ENCODE measurements at regions of chr16 and their contacts with region 1.

Region 1: DNA sequence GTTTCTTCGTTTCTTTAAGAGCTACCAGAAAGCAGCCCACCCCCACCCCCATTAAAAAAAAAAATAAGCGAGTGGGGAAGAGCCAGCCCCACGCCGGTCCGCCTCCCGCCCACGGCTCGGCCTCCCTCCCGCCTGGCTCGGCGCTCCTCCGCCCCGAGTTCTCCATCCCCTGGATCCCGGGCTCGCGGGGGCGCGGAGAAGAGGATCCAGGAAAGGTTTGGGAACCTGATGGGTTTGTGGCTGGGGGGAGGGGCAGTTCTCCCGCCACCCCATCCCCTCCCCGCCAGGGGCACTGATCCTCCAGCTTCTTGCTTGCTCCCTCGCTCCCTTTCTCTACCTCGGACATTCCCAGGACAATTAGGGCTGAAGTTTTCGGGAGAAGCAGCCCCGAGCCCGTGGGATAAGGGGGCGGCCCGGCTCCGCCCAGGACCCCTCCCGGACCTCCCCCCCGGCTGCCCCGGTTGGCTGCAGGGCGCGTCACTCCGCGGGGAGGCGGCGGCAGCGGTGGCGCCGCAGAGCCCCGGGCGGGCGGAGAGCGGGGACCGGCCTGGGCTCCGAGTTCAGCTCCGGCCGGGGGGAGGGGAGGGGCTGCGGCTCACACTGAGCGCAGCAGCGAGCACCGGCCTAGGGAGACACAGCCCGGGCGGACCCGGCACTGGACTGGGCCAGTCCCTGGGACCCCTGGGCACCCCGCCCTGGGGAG is 1.0 kb upstream of the SALL1 start:
- DNase-seq: peak; percentile 41 to 97 (median 88)
- H3K4me3 ChIP-seq: peak overlapping the region; percentile 45 to 97 (median 79)
- H3K27ac ChIP-seq: peak overlapping the region; percentile 79 to 99 (median 98)
- H3K27me3 ChIP-seq: peaks cover 0 to 90% (median 51%) of the 10 kb centered on the region in 45 donors
- CTCF ChIP-seq: peak in 4 of 56 donors; percentile 2 to 37 (median 31)

Region 2: DNA sequence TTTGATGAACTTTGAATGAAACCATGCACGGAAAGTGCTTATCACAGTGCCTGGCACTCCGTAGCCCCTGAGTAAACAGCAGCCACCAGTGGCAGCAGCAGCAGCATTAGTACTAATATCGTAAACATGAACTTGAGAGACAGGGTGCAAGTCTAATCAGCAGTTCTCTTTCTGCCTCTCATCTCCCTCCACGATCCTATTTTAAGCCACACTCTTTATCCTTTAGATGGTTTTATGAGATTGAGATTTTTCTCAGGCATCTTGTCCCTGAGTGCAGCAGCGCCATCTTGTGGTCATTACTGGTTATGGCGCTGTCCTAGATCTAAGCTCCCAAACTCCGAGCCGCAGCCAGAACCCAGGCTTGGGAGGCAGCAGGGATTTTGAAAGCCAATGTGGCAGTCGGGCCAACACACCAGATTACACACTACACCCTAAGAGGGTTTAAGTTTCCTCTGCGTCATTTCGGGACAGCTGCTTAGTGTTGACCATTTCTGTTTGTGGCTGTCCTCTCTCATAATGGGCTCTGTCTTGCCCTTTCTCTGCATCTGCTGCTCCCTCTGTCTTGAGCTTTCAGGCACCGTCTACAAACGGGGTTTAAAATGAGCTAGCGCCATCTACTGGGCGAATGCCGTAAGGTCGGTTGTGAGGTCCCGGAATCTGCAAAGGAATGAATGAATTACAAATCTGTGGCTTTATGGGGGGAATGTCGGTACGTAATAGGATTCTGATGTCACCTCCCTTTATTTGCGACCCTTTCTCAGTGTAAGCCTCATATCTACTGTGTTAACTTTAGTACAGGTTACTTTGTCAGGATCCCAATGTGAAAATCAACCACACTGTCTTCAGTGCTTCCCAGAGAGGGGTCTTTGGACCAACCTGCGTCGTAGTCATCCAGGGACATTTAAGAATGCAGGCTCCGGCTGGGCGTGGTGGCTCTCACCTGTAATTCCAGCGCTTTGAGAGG is 345.7 kb before region 1 on chr16:
- intact Hi-C with region 1: no loop called
- DNase-seq: peak; percentile 80 to 93 (median 84)
- H3K4me3 ChIP-seq: peak overlapping the region in 56 of 59 donors; percentile 17 to 62 (median 47)
- H3K27ac ChIP-seq: peak overlapping the region; percentile 69 to 96 (median 92)
- H3K27me3 ChIP-seq: no peaks in the 10 kb centered on the region
- CTCF ChIP-seq: peak; percentile 81 to 100 (median 97)

Region 3: GRCh38 chr16:50861970-50862411 is 290.1 kb before region 1 on chr16:
- intact Hi-C with region 1: loop called (anchors 2 kb)
- DNase-seq: no peak
- H3K4me3 ChIP-seq: no peak overlapping the region
- H3K27ac ChIP-seq: peak overlapping the region in 58 of 59 donors; percentile 13 to 95 (median 86)
- H3K27me3 ChIP-seq: peaks cover 0 to 3% (median 0%) of the 10 kb centered on the region in 45 donors
- CTCF ChIP-seq: peak in 1 of 56 donors; percentile 17

Region 4: GRCh38 chr16:50917950-50918703 is 234.0 kb before region 1 on chr16:
- intact Hi-C with region 1: no loop called
- DNase-seq: no peak
- H3K4me3 ChIP-seq: no peak overlapping the region
- H3K27ac ChIP-seq: no peak overlapping the region
- H3K27me3 ChIP-seq: peaks cover 0 to 12% (median 0%) of the 10 kb centered on the region in 45 donors
- CTCF ChIP-seq: no peak

Region 5: GRCh38 chr16:51268237-51268636 is 116.1 kb after region 1 on chr16:
- intact Hi-C with region 1: loop called (anchors 1 to 5 kb)
- DNase-seq: peak in 9 of 10 donors; percentile 32 to 79 (median 61)
- H3K4me3 ChIP-seq: peak overlapping the region in 34 of 59 donors; percentile 1 to 58 (median 23)
- H3K27ac ChIP-seq: peak overlapping the region in 58 of 59 donors; percentile 21 to 98 (median 89)
- H3K27me3 ChIP-seq: peaks cover 0 to 3% (median 0%) of the 10 kb centered on the region in 45 donors
- CTCF ChIP-seq: no peak

Region 6: DNA sequence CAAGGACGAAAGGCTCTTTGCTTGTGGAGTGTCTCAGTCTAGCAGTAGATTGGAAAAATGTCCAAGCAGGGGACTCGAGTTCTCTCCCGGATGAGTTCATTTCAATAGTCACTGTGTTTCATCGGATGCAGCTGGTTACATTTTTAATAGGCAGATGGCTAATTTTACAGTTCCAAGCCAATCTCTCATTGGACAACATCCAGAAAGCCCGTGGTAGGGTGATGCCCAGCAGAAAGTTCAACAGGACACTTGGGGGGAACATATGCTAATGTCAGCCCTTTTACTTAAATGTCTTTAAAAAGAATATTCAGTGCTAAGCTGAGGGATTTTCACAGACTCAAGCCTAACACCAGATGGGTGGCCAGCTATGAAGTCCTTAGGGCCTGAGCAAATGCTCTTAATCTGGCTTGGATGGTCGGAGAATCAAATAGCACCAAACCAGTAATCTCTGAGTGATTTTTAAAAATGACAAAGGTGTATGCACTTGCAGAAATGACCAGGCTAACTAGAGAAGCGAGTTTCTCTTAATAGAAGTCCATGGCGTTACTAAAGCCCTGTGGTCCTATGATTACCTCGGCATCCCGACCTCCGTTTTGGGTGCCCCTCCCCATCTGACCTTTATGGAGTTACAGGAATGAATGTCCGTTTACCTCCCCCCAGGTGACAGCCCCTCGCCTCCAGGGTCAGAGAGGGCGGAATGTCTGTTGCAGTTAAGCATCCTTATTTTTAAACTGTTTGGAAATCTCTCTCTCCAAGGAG is 288.2 kb after region 1 on chr16:
- intact Hi-C with region 1: loop called (anchors 2 to 5 kb)
- DNase-seq: peak in 2 of 10 donors; percentile 33 to 35
- H3K4me3 ChIP-seq: peak overlapping the region in 52 of 59 donors; percentile 1 to 58 (median 29)
- H3K27ac ChIP-seq: peak overlapping the region; percentile 60 to 95 (median 88)
- H3K27me3 ChIP-seq: peaks cover 0 to 37% (median 0%) of the 10 kb centered on the region in 45 donors
- CTCF ChIP-seq: peak in 1 of 56 donors; percentile 3

Region 7: GRCh38 chr16:51982715-51983680 is 830.9 kb after region 1 on chr16:
- intact Hi-C with region 1: loop called in 1 of 2 experiments (anchors 5 kb)
- DNase-seq: peak in 4 of 10 donors; percentile 5 to 63 (median 34)
- H3K4me3 ChIP-seq: peak overlapping the region in 1 of 59 donors; percentile 1
- H3K27ac ChIP-seq: peak overlapping the region in 10 of 59 donors; percentile 2 to 67 (median 34)
- H3K27me3 ChIP-seq: peaks cover 0 to 6% (median 0%) of the 10 kb centered on the region in 45 donors
- CTCF ChIP-seq: peak; percentile 69 to 99 (median 89)

Measured in dorsolateral prefrontal cortex (tissue), 120 donors.